ENCODE measurements at regions of chr1 and their contacts with region 1.

Region 1: GRCh38 chr1:247078261-247079140 is at the start of gene ZNF670:
- DNase-seq: peak; percentile 92 to 97
- H3K4me3 ChIP-seq: peak within 1 kb of the TSS; percentile 78 to 97 (median 92)
- H3K27ac ChIP-seq: peak within 1 kb of the TSS; percentile 88
- H3K4me1 ChIP-seq: peaks cover 0 to 5% (median 4%) of the 10 kb centered on the region in 4 experiments; a peak in 4 of 7 replicates
- H3K27me3 ChIP-seq: no peaks in the 10 kb centered on the region
- CTCF ChIP-seq: 0 out of 4 replicates have a peak, but pooled peaks of 1 of the 3 experiments have one; percentile 10
- EP300 ChIP-seq: no peak
- POLR2A ChIP-seq: peak; percentile 95 to 98
- RAD21 ChIP-seq: peak; percentile 27 to 29
- total RNA-seq, gene ZNF670: 11.7 and 15.4 TPM in 2 replicates

Region 2: GRCh38 chr1:247007511-247008405 is 70.7 kb before region 1 on chr1 and contains the start of gene ZNF695:
- CTCF ChIA-PET with region 1: interaction called, 6 read pairs
- POLR2A ChIA-PET with region 1: interaction called, 11 read pairs
- DNase-seq: peak; percentile 91 to 95
- H3K4me3 ChIP-seq: peak within 1 kb of the TSS; percentile 91 to 100 (median 98)
- H3K27ac ChIP-seq: peak within 1 kb of the TSS; percentile 89
- H3K4me1 ChIP-seq: no peaks in the 10 kb centered on the region
- H3K27me3 ChIP-seq: no peaks in the 10 kb centered on the region
- CTCF ChIP-seq: no peak
- EP300 ChIP-seq: no peak
- POLR2A ChIP-seq: peak in 1 of 2 experiments; percentile 95; a peak in 2 of 3 replicates
- RAD21 ChIP-seq: no peak; a peak in 1 of 4 replicates
- total RNA-seq, gene ZNF695: 25.6 and 27.0 TPM in 2 replicates

Region 3: DNA sequence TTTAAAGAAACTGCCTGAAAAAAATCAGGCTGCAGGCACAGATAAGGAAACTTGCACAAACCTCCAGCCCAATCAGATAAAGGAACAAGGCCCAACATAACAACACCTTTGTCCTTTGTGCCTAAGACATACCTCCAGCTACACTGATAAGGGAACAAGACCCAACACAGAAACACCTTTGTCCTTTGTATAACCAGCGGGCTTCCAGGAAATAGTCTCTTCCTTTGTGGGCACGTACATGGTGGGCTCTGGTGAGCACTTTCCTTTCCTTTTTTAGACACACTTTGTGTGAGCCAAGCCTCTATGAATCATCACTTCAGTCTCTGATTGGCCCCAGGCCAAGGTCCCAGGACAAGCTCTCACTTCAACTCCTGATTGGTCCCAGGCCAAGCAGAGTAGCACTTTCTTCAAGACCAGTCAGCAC is 23.5 kb before region 1 on chr1:
- CTCF ChIA-PET with region 1: no interaction called
- POLR2A ChIA-PET with region 1: no interaction called
- DNase-seq: no peak
- H3K4me3 ChIP-seq: no peak overlapping the region
- H3K27ac ChIP-seq: no peak overlapping the region
- H3K4me1 ChIP-seq: no peaks in the 10 kb centered on the region
- H3K27me3 ChIP-seq: no peaks in the 10 kb centered on the region
- CTCF ChIP-seq: no peak
- EP300 ChIP-seq: no peak
- POLR2A ChIP-seq: no peak
- RAD21 ChIP-seq: no peak

Region 4: DNA sequence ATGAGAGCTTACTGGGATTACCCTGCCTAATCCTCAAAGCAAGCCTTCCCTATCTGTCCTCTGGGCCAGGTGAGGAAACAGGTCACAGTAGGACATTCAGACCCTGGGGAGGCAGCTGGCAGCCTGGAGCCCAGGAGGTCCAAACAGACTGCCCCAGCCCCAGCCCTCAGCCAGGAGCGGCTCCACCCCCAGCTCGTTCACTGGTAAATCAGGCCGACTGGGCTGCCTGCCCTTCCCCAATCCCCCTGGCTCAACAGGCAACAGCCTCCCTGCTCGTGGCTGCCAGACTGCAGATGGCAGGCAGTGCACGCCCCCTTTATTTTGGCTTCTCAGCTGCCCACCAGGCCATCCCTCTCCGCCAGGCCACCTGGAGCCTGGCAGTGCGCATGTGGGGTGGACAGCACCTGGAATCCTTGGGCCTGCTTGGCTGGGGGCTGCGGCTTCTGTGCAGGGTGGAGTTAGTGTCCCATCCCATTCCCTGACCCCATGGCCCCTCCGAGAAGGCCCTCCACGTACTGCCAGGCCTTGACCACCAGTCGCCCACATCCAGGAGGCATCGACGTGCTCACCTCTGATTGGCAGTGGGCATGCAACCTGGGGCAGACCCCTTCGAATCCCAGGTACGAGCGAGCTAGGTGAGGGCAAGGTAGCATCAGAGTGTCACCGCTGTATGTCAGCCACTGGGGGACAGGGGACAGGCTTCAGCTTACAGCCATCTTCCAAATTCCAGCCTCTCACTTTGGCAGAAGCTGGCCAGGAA is 11.3 kb after region 1 on chr1:
- CTCF ChIA-PET with region 1: interaction called, 3 read pairs
- POLR2A ChIA-PET with region 1: interaction called, 11 read pairs
- DNase-seq: no peak
- H3K4me3 ChIP-seq: no peak overlapping the region
- H3K27ac ChIP-seq: no peak overlapping the region
- H3K4me1 ChIP-seq: peaks cover 0 to 6% (median 0%) of the 10 kb centered on the region in 4 experiments; a peak in 2 of 7 replicates
- H3K27me3 ChIP-seq: no peaks in the 10 kb centered on the region
- CTCF ChIP-seq: no peak
- EP300 ChIP-seq: no peak
- POLR2A ChIP-seq: no peak
- RAD21 ChIP-seq: no peak

Region 5: GRCh38 chr1:247103859-247104591 is 25.5 kb after region 1 on chr1 and contains the start of gene ZNF669:
- CTCF ChIA-PET with region 1: interaction called, 5 read pairs
- POLR2A ChIA-PET with region 1: interaction called, 11 read pairs
- DNase-seq: peak; percentile 87 to 98
- H3K4me3 ChIP-seq: peak within 1 kb of the TSS; percentile 93 to 97 (median 94)
- H3K27ac ChIP-seq: peak within 1 kb of the TSS; percentile 91
- H3K4me1 ChIP-seq: peaks cover 1 to 15% (median 6%) of the 10 kb centered on the region in 4 experiments; a peak in 5 of 7 replicates
- H3K27me3 ChIP-seq: no peaks in the 10 kb centered on the region; a peak in 2 of 7 replicates
- CTCF ChIP-seq: no peak
- EP300 ChIP-seq: no peak
- POLR2A ChIP-seq: peak; percentile 88 to 95
- RAD21 ChIP-seq: no peak
- total RNA-seq, gene ZNF669: 19.6 and 20.3 TPM in 2 replicates

Measured in H1 (cell line).